ENCODE measurements at regions of chr2 and their contacts with region 1.

Region 1: DNA sequence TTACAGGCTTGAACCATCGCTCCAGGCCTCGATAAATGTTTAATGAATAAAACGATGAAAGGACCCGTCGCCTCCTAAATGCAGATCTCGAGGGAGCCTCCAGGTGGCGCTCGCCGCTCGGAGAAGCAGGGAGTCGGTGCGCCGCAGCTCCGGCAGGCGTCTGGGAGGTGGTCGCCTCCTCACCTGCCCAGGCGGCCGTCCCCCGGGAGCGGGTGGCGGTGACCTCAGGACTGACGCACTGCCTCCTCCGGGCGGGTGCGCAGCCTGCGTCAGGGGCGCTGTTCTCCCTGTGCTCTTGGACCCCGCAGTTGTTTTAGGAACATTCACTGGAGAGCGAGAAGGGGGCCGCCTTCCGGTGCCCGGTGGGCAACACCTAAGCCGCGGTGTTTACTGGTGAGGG is 38.6 kb upstream of the POLE4 start:
- DNase-seq: peak; percentile 51 to 91 (median 79)

Region 2: GRCh38 chr2:74991977-74992376 is 72.2 kb after region 1 on chr2:
- intact Hi-C with region 1: no loop called
- DNase-seq: no peak

Region 3: DNA sequence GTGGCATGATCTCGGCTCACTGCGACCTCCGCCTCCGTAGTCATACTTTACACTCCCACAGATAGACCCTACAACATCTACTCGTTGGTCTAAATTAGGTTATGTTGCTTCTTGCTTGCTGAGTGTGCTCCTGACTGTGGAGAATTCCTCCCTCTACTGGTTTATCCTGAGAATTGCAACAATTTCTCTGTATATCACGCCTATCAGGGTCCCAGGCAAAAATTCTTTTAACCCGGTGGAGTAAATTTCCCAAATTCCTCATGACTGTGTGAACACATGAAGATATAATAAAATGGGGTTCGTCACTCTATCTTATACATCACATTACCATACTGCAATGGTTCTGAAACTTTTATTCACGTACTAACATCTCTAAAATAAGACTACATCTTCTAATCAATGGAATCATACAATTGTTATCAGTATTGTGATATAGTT is 484.2 kb after region 1 on chr2:
- intact Hi-C with region 1: loop called (anchors 5 kb)
- DNase-seq: peak in 8 of 42 donors; percentile 2 to 39 (median 18)

Region 4: DNA sequence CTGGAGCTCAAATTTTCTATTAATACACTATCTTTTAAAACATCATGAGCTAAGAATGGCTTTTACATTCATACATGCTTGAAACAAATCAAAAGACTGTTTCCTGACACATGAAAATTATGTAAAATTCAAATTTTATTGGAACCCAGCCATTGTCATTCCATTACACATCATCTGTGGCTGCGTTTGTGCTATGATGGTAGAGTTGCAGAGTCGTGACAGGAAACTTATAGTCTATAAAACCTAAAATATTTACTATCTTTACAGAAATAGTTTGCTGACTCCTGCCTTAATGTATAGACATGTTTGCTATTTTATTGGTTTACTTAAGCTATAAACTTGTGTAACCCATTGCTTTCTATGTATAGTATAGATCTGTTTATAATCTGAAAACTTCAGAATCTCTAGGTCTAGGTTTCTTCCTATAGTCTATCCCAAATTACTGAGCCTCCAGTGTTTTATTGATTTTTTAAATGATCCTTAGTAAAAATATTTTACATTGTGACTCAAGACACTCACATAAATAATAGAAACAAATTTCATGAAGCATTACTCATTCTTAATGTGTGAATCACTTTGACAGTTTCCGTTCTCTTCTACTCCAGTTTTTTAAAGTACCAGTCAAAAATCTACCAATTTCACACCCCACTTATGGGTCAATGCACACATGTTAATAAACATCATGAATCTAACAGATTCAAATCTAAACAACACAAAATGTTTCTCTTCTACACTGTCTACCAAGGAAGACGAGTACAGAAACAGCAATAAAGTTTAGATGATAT is 700.3 kb after region 1 on chr2:
- intact Hi-C with region 1: loop called (anchors 10 kb)
- DNase-seq: no peak

Measured in head of caudate nucleus (tissue), 42 donors.